ENCODE measurements at regions of chr6 and their contacts with region 1.

Region 1: DNA sequence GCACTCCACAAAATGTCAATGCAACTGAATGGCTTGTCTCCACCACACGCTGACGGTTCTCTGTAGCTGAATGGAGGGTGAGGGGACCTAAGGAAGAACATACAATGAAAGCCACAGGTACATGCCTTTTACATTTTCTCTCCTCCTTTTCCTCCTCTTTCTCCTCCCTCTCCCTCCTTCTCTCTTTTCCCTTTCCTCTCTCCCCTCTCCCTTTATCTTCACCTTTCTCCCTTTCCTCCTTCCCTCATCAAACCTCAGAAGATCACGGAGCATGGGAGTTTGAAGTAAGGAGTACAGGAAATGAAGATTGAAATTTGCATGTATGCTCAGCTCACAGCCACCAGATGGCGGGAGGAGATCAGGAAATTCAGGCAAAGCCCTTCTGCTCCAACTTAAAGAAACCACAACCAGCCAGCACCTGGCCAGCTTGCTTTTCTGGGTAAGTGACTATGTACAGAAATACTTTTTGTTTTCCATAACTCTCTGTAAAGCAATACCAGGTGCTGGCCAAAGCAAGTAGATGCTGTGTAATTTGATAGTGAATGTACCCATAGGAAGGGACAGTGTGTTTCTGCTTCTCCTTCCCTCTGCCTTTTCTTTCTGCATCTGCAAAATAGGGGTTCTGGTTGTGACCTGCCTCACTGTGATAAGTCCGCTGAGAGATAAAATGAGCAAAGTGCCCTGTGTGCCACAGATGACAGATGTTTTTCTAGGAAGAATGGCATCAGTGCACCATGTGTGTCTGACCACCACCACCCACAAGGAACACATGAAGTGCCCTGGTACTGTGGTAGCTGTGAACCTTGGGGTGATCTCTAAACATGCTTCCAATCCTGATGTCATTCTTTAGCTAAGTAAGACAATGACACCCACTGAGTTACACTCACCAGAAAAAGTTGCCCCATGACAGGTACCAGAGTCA is 18.6 kb upstream of the FOXO3 start:
- DNase-seq: peak; percentile 68 to 71
- H3K4me3 ChIP-seq: no peak overlapping the region
- H3K27ac ChIP-seq: no peak overlapping the region
- H3K4me1 ChIP-seq: peaks cover 3% of the 10 kb centered on the region; the same call in 1 of the 2 replicates
- H3K27me3 ChIP-seq: no peaks in the 10 kb centered on the region
- CTCF ChIP-seq: peak; percentile 98

Region 2: DNA sequence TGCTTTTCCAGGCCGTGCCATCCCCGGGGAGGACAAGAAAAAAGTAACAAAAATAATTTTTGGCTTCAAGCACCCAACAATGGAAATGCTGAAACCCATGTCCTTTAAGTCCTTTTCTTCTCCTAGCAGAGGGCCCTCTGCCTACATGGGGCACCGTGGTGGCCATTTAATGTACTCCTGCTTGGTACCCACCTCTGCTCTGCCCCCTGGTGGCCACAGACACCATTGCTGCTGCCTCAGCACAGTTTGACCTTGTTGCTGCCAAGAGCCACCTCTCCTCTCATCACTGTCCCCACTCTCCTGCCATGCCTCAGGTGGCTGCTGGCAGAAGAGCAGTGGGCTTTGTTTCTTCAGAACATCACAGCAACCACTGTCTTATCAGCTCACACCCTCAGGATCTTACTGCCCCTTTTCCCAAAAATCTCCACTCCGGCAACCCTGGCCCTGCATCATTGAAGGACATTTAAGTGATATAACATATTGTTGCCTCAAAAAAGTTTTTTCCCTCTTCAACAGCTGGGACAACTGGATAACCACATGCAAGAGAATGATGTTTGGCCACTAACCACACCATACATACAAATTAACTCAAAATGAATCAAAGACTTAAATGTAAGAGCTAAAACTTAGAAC is 293.2 kb after region 1 on chr6:
- CTCF ChIA-PET with region 1: interaction called, 5 read pairs
- POLR2A ChIA-PET with region 1: no interaction called
- intact Hi-C with region 1: loop called (anchors 1 kb)
- DNase-seq: peak; percentile 61 to 78
- H3K4me3 ChIP-seq: no peak overlapping the region
- H3K27ac ChIP-seq: no peak overlapping the region
- H3K4me1 ChIP-seq: no peaks in the 10 kb centered on the region
- H3K27me3 ChIP-seq: no peaks in the 10 kb centered on the region
- CTCF ChIP-seq: peak; percentile 95

Region 3: DNA sequence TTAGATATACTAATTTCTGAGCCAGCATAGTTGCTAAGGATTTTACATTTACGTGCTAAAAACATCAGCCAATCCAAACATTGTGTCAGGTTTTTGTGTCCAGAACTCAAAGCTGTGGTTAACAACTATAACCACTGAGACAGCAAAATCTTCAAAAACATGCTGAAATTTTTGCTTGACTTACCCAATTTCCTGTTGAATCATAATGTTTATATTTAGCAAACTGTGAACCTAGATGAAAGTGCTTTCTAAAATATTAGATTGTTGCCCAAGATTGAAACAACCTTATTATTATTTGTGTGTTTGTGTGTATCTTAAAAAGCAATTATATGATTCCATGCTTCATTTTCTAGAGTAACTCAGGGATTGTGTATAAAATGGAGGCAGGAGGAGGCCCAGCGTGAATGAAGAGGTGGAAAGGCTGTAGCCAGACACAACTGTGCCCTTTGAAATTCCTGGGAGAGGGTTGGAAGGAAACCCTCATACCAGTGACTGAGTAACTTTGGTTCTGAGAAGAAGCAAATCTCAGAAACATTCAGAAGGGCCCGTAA is 354.1 kb after region 1 on chr6:
- CTCF ChIA-PET with region 1: interaction called, 9 read pairs
- POLR2A ChIA-PET with region 1: interaction called, 7 read pairs
- intact Hi-C with region 1: loop called (anchors 1 kb)
- DNase-seq: peak in 1 of 2 experiments; percentile 50
- H3K4me3 ChIP-seq: no peak overlapping the region
- H3K27ac ChIP-seq: peak overlapping the region; percentile 57
- H3K4me1 ChIP-seq: peaks cover 14% of the 10 kb centered on the region
- H3K27me3 ChIP-seq: no peaks in the 10 kb centered on the region
- CTCF ChIP-seq: no peak

Region 4: DNA sequence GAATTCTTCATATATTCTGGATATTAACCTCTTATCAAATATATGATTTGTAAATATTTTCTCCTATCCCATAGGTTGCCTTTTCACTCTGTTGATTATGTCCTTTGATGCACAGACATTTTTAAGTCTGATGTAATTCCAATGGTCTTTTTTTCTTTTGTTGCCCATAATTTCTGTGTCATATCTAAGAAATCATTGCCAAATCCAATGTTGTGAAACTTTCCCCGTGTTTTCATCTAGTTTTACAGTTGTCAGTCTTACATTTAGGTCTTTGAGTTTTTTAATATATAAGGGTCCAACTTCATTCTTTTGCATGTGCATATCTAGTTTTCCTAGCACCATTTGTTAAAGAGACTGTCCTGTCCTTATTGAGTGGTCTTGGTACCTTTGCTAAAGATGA is 441.1 kb after region 1 on chr6:
- CTCF ChIA-PET with region 1: no interaction called
- POLR2A ChIA-PET with region 1: no interaction called
- intact Hi-C with region 1: no loop called
- DNase-seq: no peak
- H3K4me3 ChIP-seq: no peak overlapping the region
- H3K27ac ChIP-seq: no peak overlapping the region
- H3K4me1 ChIP-seq: peaks cover 3% of the 10 kb centered on the region
- H3K27me3 ChIP-seq: no peaks in the 10 kb centered on the region
- CTCF ChIP-seq: no peak

Region 5: DNA sequence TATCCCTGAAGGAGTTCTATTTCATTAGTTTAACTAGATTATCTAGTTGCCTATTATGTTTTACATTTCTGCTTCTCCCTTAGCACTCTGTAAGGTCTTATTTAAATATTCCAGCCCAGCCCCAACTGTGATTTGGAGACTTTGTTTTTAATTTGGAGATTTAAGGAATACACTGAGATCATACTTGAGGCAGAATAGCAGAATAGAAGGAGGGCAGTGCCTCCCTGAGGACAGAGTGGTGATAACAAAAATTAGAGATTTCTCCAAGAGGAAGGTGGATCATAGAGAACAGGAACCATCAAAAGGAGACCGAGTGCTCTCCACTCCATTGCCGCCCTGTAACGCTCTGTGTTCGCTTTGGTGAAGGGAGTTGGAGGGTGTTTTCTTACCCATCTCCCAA is 854.9 kb after region 1 on chr6:
- CTCF ChIA-PET with region 1: interaction called, 5 read pairs
- POLR2A ChIA-PET with region 1: no interaction called
- intact Hi-C with region 1: loop called (anchors 5 kb)
- DNase-seq: no peak
- H3K4me3 ChIP-seq: no peak overlapping the region
- H3K27ac ChIP-seq: no peak overlapping the region
- H3K4me1 ChIP-seq: 0 out of 2 replicates have a peak, but pooled peaks cover 5% of the 10 kb centered on the region
- H3K27me3 ChIP-seq: no peaks in the 10 kb centered on the region
- CTCF ChIP-seq: peak; percentile 64

Measured in PC-9 (cell line).